ENCODE measurements at regions of chr1 and their contacts with region 1.

Region 1: GRCh38 chr1:234836045-234836681 is 226.2 kb upstream of the IRF2BP2 start:
- DNase-seq: no peak
- H3K4me3 ChIP-seq: no peak overlapping the region
- CTCF ChIP-seq: no peak

Region 2: DNA sequence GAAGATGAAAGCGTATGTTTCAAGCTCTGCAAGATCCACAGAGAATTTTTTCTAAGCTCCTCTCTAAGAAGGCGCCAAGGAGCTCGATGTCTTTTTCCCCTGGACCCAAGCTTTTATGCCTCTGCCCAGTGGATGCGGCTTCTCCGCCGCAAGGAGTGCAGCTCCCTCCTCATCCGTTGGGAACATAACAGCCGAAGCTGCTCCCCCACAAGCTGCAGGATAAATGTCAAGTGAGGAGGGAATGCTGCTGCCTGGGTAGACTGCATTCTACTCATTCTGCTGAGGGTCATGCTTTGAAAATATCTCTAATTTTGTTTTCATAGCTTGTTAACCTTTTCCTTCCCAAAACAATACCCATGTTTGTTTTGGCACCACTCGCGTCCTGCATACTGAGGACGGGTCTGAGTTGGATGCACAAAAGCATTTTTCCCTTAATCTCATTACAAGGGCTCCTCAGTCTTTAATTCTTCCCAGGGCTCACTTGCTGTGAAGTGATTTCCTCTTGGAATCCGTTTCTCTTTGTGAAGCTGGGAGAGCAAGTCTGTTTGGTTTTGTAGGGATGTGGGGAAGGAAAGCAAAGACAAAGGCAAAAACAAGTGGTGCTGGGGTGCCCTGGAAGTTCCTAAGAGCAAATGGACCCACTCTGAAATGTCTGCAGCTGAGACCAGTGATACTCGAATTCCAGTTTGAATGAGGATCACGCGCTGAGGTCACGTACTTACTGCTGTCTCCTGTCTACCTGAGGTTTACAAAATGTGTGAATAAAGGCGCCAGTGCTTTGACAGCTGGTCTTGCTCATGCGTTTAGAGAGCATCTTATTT is 92.2 kb before region 1 on chr1:
- in situ Hi-C with region 1: loop called (anchors 5 kb)
- DNase-seq: peak; percentile 91
- H3K4me3 ChIP-seq: no peak overlapping the region
- CTCF ChIP-seq: peak; percentile 3

Region 3: GRCh38 chr1:234866007-234866866 is 30.1 kb after region 1 on chr1:
- in situ Hi-C with region 1: no loop called
- DNase-seq: no peak
- H3K4me3 ChIP-seq: no peak overlapping the region
- CTCF ChIP-seq: no peak

Region 4: GRCh38 chr1:234955107-234955731 is 119.1 kb after region 1 on chr1:
- in situ Hi-C with region 1: loop called (anchors 5 kb)
- DNase-seq: no peak
- H3K4me3 ChIP-seq: no peak overlapping the region
- CTCF ChIP-seq: no peak

Region 5: DNA sequence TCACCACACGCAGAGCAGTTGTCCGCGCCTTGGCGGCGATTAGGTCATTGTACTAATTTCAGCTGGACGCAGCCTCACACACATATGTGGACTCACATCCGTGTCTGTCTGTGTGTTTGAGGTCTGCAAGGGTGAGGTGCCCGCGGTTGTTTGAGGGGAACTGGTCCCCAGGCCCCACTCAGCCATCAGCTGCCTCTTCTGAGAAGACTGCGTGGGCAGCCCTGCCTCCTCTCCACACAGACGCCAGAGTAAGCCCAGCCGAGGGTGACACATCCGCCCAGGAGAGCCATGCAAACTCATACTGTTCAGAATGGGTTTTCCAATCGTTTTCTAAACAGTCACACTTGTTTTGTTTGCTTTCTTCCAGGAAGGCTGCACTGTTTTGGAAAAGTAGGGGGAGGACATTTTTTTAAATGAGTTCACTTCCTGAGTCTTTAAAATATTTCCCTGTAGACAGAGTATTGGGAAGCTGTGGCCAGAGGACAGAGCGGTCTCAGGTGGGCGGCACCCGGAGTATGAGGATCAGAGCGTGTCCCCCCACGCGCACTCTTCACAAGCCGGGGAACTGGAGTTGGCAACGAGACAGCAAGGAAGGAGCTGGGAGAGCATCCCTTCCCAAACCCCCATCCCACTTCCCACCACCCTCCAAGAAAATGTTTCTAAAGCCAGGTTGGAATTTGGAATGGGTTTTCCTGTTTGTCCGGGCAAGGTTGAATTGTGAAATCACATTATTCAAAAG is 239.2 kb after region 1 on chr1:
- in situ Hi-C with region 1: loop called (anchors 10 kb)
- DNase-seq: peak; percentile 32
- H3K4me3 ChIP-seq: no peak overlapping the region
- CTCF ChIP-seq: no peak